ENCODE measurements at regions of chr17 and their contacts with region 1.

Region 1: DNA sequence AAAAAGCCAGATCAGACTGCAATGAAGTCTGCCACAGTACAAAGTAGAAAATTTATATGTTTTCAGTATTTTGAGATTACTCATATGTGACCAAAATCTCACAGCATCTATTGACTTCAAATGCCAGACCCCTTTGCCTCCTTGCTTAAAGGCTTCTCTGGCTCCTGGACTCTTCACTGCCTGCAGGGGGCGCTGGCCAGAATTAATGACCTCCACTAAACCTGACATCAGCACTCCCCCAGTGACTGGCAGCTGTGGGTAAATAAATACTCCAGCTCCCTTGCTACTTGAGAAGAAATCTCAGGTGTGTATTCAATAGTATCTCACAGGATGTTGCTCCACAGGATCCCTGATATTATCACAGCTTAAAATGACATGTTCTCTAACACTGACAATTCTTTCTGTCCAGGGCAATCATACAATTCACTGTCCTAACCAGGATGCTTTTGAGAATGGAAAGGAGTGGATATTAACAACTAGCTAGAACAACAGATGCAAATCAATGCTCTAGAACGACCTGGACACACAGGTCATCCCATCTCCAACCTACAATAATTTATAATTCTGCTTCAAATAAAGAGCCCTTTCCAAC is 4.0 kb downstream of the BECN1 start:
- DNase-seq: no peak
- H3K4me3 ChIP-seq: no peak overlapping the region
- H3K27ac ChIP-seq: no peak overlapping the region
- H3K27me3 ChIP-seq: no peaks in the 10 kb centered on the region
- CTCF ChIP-seq: peak; percentile 76

Region 2: GRCh38 chr17:42760652-42761581 is 59.1 kb before region 1 on chr17 and contains the start of gene RAMP2:
- CTCF ChIA-PET with region 1: interaction called, 10 read pairs
- POLR2A ChIA-PET with region 1: no interaction called
- DNase-seq: no peak
- H3K4me3 ChIP-seq: peak within 1 kb of the TSS; percentile 49
- H3K27ac ChIP-seq: no peak within 1 kb of the TSS
- H3K27me3 ChIP-seq: peaks cover 34% of the 10 kb centered on the region
- CTCF ChIP-seq: no peak
- polyA plus RNA-seq, gene RAMP2: 1.4 and 1.7 TPM in 2 replicates

Region 3: DNA sequence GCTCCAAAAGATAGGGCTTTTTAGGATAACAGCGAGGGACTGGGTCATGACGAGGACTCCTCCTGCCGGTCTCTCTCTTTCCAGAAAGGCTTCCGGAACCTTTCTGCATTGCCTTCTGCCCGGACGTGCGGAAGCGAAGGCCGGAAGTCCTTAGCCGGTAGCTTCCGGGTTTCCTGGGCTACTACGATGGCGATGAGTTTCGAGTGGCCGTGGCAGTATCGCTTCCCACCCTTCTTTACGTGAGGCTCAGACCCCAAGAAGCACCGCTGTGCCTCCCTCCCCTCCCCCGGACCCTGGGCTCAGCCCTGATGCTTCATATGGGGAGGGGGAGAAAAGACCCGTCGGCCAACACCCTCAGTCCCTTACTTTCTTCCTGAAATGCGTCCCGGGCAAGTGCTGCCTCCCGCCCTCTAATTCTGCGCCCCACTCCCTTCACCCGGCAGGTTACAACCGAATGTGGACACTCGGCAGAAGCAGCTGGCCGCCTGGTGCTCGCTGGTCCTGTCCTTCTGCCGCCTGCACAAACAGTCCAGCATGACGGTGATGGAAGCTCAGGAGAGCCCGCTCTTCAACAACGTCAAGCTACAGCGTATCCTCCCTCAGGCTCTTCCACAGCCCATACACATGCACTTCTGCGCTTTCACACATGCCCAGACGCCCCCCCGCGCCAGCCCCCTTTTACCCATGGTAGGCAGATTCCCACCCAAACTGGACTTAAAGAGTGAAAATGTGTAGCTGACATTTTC is 46.6 kb before region 1 on chr17 and contains the start of gene VPS25:
- CTCF ChIA-PET with region 1: interaction called, 16 read pairs
- POLR2A ChIA-PET with region 1: interaction called, 6 read pairs
- DNase-seq: peak; percentile 55
- H3K4me3 ChIP-seq: peak within 1 kb of the TSS; percentile 97
- H3K27ac ChIP-seq: peak within 1 kb of the TSS; percentile 85
- H3K27me3 ChIP-seq: no peaks in the 10 kb centered on the region
- CTCF ChIP-seq: peak; percentile 30
- polyA plus RNA-seq, gene VPS25: 94.0 and 107 TPM in 2 replicates

Region 4: GRCh38 chr17:42803074-42803883 is 16.8 kb before region 1 on chr17:
- CTCF ChIA-PET with region 1: interaction called, 10 read pairs
- POLR2A ChIA-PET with region 1: interaction called, 10 read pairs
- DNase-seq: peak; percentile 16
- H3K4me3 ChIP-seq: no peak overlapping the region
- H3K27ac ChIP-seq: peak overlapping the region; percentile 54
- H3K27me3 ChIP-seq: peaks cover 3% of the 10 kb centered on the region
- CTCF ChIP-seq: no peak

Region 5: DNA sequence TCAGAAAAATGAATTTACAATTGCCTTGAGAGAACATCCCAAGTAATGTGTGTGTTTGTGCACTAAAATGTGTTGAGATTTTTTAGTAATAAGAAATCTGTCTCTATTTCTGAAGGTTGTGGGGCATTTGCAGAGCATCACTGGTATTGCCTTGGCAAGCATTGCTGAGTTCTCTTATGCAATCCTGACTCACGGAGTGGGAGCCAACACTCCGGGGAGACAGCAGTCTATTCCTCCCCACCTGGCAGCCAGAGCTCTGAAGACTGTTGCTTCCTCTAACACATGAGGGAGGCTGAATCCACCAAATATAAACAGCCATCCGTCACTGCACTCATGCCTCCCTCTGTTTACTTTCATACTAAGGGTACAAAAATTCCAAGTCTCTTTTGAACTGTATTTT is 10.8 kb before region 1 on chr17:
- CTCF ChIA-PET with region 1: interaction called, 12 read pairs
- POLR2A ChIA-PET with region 1: interaction called, 5 read pairs
- DNase-seq: peak; percentile 82
- H3K4me3 ChIP-seq: no peak overlapping the region
- H3K27ac ChIP-seq: no peak overlapping the region
- H3K27me3 ChIP-seq: no peaks in the 10 kb centered on the region
- CTCF ChIP-seq: no peak

Region 6: DNA sequence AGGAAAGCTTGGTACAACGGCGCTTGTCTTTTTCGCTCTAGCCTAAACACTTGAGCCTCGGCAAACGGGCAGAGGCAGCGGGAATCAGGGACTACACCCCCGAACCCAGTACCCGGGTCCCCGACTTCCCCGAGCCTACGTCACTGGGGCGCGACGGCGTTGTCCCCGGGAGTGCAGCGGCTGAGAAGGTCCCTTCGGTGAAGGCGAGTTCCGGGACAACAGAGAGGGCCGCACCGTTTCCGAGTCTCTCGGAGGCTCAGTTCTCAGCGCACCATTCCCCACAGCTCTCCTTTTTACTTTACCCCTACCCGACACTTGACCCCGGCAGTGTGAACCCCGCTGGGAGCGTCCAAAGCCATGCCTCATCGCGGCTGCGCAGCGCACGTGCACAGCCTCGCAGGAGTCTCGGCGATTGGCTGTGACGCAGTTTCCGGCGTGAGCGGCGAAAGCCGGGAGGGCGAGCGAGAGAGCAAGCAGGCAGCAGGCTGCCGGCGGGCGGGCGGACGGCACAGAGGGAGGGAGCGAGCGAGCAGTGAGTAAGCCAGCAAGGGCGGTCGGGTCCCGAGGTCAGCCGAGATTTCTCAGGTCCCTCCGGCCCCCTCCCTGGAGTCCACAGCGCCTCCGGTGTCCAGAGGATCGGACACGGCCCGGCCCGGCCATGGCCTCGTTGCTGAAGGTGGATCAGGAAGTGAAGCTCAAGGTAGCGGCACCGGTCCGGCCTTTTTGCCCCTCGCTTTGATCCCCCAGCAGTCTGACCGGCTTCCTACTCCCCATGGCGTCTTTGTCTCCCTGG is 13.1 kb after region 1 on chr17 and contains the start of gene PSME3:
- CTCF ChIA-PET with region 1: interaction called, 35 read pairs
- POLR2A ChIA-PET with region 1: interaction called, 16 read pairs
- DNase-seq: peak; percentile 47
- H3K4me3 ChIP-seq: peak within 1 kb of the TSS; percentile 99
- H3K27ac ChIP-seq: peak within 1 kb of the TSS; percentile 65
- H3K27me3 ChIP-seq: no peaks in the 10 kb centered on the region
- CTCF ChIP-seq: no peak
- polyA plus RNA-seq, gene PSME3: 111 and 129 TPM in 2 replicates

Region 7: DNA sequence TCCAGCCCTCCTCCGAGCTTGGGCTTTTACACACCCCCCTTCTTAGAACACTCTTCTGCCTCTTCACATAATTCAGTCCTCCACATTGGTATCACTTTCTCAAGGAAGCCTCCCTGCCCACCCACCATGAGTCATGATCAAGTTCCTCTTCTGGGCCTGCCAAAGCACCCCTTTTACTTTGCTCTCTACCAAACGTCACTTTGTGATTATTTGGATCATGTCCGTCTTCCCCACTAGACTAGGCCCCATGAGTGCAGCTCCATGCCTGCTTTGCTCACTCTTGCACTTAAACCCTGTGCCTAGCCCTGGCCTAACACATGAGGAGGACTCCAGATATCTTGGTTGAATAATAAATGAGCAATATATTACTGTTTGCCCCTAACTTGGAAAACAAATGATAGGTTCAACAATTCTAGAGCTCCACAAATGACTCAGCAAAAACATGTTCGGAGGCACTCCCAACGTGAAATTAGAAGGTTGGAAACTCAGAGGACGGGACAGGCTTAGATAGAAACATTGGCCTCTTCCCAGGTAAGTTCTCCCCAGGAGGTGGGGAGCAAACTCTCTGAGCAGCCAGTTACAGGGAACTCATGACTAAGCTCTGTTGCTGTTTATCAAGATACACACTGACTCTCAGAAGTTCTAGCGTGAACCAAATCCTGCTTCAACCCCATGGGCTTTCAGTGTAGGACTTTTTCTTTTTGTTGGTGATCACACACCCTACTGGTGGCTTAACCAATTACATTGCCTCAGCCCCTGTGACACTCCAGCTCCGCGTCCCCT is 108.9 kb after region 1 on chr17:
- CTCF ChIA-PET with region 1: interaction called, 15 read pairs
- POLR2A ChIA-PET with region 1: no interaction called
- DNase-seq: peak; percentile 52
- H3K4me3 ChIP-seq: no peak overlapping the region
- H3K27ac ChIP-seq: peak overlapping the region; percentile 63
- H3K27me3 ChIP-seq: peaks cover 5% of the 10 kb centered on the region
- CTCF ChIP-seq: peak; percentile 65

Measured in AG04450 (cell line).